Activated T-helper 1 cell treated with anti-CD3 and anti-CD28 coated beads, Interleukin-12 subunit alpha, Interleukin-12 subunit beta, Interleukin-2, Interleukin-4 antibody, amounts not matched to agents 30 ng/mL and 10 ng/mL and 1 ng/mL, durations not matched to agents 14 hours and 24 hours and 36 hours (primary cell): ENCODE measurements at regions of chr2 and their contacts with region 1.

Region 1: GRCh38 chr2:130342533-130343275 is at the start of gene IMP4:
- DNase-seq: peak; percentile 95
- H3K4me3 Mint-ChIP-seq: peak within 1 kb of the TSS; percentile 100
- H3K27ac Mint-ChIP-seq: peak within 1 kb of the TSS; percentile 97
- H3K4me1 Mint-ChIP-seq: peaks cover 21% of the 10 kb centered on the region
- H3K27me3 Mint-ChIP-seq: no peaks in the 10 kb centered on the region
- total RNA-seq, gene IMP4: 169 and 184 TPM in 2 replicates

Region 2: GRCh38 chr2:130181325-130181879 is 161.3 kb before region 1 on chr2 and contains the start of gene SMPD4:
- intact Hi-C with region 1: loop called (anchors 1 kb)
- DNase-seq: peak; percentile 97
- H3K4me3 Mint-ChIP-seq: peak within 1 kb of the TSS; percentile 93
- H3K27ac Mint-ChIP-seq: peak within 1 kb of the TSS; percentile 92
- H3K4me1 Mint-ChIP-seq: no peaks in the 10 kb centered on the region
- H3K27me3 Mint-ChIP-seq: no peaks in the 10 kb centered on the region
- total RNA-seq, gene SMPD4: 92.3 and 99.0 TPM in 2 replicates

Region 3: DNA sequence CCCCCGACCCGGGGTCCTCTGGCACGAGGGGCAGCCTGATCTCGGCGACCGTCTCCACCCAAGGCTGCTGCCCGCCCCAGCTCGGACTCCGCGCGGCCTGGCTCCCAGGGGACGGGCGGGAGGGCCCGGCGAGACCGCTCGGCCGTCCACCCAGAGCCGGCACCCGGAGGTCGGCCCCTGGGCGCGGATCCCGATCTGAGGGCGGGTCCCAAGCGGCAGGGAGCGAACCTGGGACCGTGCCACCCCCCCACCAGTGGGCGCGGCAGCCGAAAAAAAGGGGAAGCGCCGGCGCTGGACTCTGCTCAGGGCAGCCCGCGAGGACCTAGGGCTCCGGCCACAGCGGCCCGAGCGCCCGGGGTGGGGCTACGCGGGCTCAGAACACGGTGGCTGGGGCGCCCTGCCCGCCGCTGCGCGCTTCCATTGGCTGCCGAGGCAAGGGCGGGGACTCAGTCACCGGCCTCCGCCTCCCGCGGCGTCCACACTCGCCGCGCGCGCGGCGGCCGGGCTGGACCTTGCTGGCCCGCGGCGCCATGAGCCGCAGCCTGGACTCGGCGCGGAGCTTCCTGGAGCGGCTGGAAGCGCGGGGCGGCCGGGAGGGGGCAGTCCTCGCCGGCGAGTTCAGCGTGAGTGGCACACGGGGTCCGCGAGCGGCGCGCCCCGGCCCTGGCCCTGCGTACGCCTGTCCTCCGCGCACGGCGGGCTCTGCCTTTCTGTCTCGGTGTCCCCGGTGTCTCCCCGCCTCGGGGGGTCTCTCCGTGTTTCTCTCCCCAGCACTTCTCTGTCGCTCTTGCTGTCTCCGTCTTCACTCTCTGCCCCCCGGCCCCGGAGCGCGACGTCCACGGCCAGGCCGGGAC is 13.1 kb after region 1 on chr2 and contains the start of gene PTPN18:
- intact Hi-C with region 1: loop called (anchors 1 kb)
- DNase-seq: peak; percentile 67
- H3K4me3 Mint-ChIP-seq: peak within 1 kb of the TSS; percentile 83
- H3K27ac Mint-ChIP-seq: peak within 1 kb of the TSS; percentile 52
- H3K4me1 Mint-ChIP-seq: peaks cover 25% of the 10 kb centered on the region
- H3K27me3 Mint-ChIP-seq: no peaks in the 10 kb centered on the region
- total RNA-seq, gene PTPN18: 66.9 and 68.9 TPM in 2 replicates

Region 4: DNA sequence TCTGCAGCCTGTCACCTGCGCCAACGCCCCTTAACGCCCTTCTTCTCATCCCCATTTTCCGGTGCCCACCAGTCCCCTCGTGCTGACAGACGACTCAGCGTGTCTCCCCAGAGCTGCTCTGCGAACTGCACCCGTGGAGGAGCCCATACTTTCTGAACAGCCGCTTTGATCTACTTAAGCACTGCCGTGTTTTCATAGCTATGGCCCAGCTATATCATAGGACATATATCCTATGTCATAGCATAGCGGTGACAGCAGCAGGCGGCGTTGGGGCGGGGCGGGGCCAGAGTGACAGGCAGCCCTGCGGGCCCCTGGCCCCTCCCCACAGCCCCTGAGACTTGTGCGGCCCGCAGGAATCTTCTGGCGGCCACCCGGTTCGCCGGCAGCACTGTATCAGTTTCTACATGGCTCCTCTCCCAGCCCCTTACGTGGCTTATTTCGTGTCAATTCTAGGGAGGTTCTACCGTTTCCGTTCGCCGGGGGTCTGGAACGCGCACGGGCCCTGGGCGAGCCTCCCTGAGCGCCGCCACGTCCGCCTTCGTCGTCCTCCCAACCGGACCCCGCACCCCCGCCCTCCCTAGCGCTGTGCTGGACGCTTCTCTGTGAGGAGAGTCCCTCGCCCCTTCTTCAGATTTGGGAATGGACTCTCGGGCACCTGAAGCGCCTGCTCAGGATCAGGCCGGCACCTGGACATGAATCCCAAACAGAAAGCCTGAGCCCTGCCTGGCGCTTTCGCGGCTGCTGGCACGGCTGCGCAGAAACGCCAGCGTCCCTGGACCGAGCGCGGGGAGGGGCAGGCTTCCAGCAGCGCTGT is 48.6 kb after region 1 on chr2:
- intact Hi-C with region 1: loop called (anchors 1 kb)
- DNase-seq: peak; percentile 68
- H3K4me3 Mint-ChIP-seq: peak overlapping the region; percentile 93
- H3K27ac Mint-ChIP-seq: peak overlapping the region; percentile 93
- H3K4me1 Mint-ChIP-seq: peaks cover 19% of the 10 kb centered on the region
- H3K27me3 Mint-ChIP-seq: peaks cover 12% of the 10 kb centered on the region

Region 5: GRCh38 chr2:130972410-130972809 is 629.7 kb after region 1 on chr2:
- intact Hi-C with region 1: loop called (anchors 5 kb)
- DNase-seq: peak; percentile 16
- H3K4me3 Mint-ChIP-seq: no peak overlapping the region
- H3K27ac Mint-ChIP-seq: peak overlapping the region; percentile 57
- H3K4me1 Mint-ChIP-seq: peaks cover 16% of the 10 kb centered on the region
- H3K27me3 Mint-ChIP-seq: peaks cover 13% of the 10 kb centered on the region